H1 (cell line): ENCODE measurements at regions of chrX and their contacts with region 1.

Region 1: DNA sequence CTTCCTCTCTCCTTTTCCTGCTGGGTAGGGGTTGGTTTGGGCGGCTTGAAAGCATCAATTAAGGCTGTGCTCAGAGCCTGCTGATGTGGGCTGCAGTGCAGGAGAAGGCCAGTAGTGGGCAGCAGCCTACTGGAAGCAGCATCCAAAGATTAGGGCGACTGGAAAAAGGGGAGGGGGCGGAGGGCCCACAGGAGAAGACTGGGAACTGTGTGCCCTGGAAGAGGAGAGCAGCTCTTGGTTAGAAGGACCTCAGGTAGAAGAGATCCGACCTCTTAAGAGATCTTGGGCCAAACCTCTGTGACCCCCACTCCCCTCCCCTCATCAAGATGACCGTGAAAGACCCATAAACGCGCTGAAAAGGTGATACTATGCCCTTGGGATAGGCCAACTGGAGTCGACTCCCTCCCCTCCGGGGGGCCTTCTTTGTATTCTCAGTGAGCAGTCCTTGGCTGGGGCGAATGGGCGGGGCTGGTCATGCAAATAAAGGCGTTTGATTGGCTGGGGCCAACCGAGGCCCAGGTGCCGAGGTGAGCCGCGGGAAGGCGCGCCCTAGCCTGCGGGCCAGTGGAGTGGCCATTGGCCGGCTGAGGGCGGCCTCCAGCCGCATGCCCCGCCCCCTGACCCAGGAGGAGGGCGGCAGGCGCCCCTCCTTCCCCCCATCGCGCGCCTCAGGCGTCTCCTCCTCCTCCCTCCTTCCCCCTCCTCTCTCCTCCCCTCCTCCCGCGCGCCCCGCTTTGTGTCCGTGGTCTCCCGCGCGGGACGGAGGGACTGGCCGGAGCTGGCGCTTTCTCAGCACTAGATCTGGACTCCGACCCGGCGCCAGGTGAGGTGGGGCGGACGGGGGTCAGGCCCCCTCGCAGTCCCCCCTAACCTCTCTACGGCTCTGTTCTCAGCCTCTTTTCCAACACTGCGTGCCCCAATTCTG is 10.1 kb downstream of the DLG3 start:
- DNase-seq: peak; percentile 85 to 86
- H3K4me3 ChIP-seq: peak overlapping the region; percentile 66 to 94 (median 84)
- H3K27ac ChIP-seq: peak overlapping the region; percentile 93
- H3K4me1 ChIP-seq: peaks cover 0 to 17% (median 5%) of the 10 kb centered on the region in 4 experiments; a peak in 6 of 7 replicates
- H3K27me3 ChIP-seq: no peaks in the 10 kb centered on the region
- CTCF ChIP-seq: peak in 2 of 3 experiments; percentile 69 to 86; a peak in 3 of 4 replicates
- EP300 ChIP-seq: no peak
- POLR2A ChIP-seq: peak in 1 of 2 experiments; percentile 41; a peak in 1 of 3 replicates
- RAD21 ChIP-seq: peak; percentile 75 to 85

Region 2: GRCh38 chrX:70444326-70444945 is 10.3 kb before region 1 on chrX and contains the start of gene DLG3:
- CTCF ChIA-PET with region 1: interaction called, 10 read pairs
- POLR2A ChIA-PET with region 1: interaction called, 4 read pairs
- DNase-seq: peak in 1 of 2 experiments; percentile 66
- H3K4me3 ChIP-seq: peak within 1 kb of the TSS; percentile 2 to 54 (median 10); a peak in 4 of 8 replicates
- H3K27ac ChIP-seq: no peak within 1 kb of the TSS
- H3K4me1 ChIP-seq: no peaks in the 10 kb centered on the region; a peak in 1 of 7 replicates
- H3K27me3 ChIP-seq: peaks cover 0 to 12% (median 10%) of the 10 kb centered on the region in 4 experiments; a peak in 4 of 7 replicates
- CTCF ChIP-seq: no peak
- EP300 ChIP-seq: no peak
- POLR2A ChIP-seq: no peak
- RAD21 ChIP-seq: no peak
- total RNA-seq, gene DLG3: 57.1 and 63.8 TPM in 2 replicates

Region 3: GRCh38 chrX:70476934-70477733 is 22.4 kb after region 1 on chrX:
- CTCF ChIA-PET with region 1: interaction called, 4 read pairs
- POLR2A ChIA-PET with region 1: interaction called, 29 read pairs
- DNase-seq: peak in 1 of 2 experiments; percentile 36
- H3K4me3 ChIP-seq: peak overlapping the region in 3 of 4 experiments; percentile 12 to 40 (median 14); a peak in 6 of 8 replicates
- H3K27ac ChIP-seq: peak overlapping the region; percentile 25; the same call in 1 of the 2 replicates
- H3K4me1 ChIP-seq: peaks cover 7 to 34% (median 24%) of the 10 kb centered on the region in 4 experiments; a peak in 6 of 7 replicates
- H3K27me3 ChIP-seq: no peaks in the 10 kb centered on the region
- CTCF ChIP-seq: no peak
- EP300 ChIP-seq: no peak
- POLR2A ChIP-seq: no peak
- RAD21 ChIP-seq: no peak

Region 4: GRCh38 chrX:70592091-70592490 is 137.4 kb after region 1 on chrX:
- CTCF ChIA-PET with region 1: no interaction called
- POLR2A ChIA-PET with region 1: no interaction called
- DNase-seq: no peak
- H3K4me3 ChIP-seq: no peak overlapping the region
- H3K27ac ChIP-seq: no peak overlapping the region
- H3K4me1 ChIP-seq: no peaks in the 10 kb centered on the region
- H3K27me3 ChIP-seq: no peaks in the 10 kb centered on the region
- CTCF ChIP-seq: no peak
- EP300 ChIP-seq: no peak
- POLR2A ChIP-seq: no peak
- RAD21 ChIP-seq: no peak